Left lung (tissue), 14 donors: ENCODE measurements at regions of chr13 and their contacts with region 1.

Region 1: GRCh38 chr13:114065141-114065925 is 67.1 kb downstream of the RASA3 start:
- DNase-seq: peak; percentile 79 to 95 (median 88)
- ATAC-seq: peak; percentile 83
- H3K4me3 ChIP-seq: peak overlapping the region in 1 of 2 donors; percentile 35
- H3K27ac ChIP-seq: peak overlapping the region; percentile 91 to 98
- H3K4me1 ChIP-seq: peaks cover 51 to 76% of the 10 kb centered on the region in 2 donors
- H3K27me3 ChIP-seq: no peaks in the 10 kb centered on the region
- CTCF ChIP-seq: no peak

Region 2: DNA sequence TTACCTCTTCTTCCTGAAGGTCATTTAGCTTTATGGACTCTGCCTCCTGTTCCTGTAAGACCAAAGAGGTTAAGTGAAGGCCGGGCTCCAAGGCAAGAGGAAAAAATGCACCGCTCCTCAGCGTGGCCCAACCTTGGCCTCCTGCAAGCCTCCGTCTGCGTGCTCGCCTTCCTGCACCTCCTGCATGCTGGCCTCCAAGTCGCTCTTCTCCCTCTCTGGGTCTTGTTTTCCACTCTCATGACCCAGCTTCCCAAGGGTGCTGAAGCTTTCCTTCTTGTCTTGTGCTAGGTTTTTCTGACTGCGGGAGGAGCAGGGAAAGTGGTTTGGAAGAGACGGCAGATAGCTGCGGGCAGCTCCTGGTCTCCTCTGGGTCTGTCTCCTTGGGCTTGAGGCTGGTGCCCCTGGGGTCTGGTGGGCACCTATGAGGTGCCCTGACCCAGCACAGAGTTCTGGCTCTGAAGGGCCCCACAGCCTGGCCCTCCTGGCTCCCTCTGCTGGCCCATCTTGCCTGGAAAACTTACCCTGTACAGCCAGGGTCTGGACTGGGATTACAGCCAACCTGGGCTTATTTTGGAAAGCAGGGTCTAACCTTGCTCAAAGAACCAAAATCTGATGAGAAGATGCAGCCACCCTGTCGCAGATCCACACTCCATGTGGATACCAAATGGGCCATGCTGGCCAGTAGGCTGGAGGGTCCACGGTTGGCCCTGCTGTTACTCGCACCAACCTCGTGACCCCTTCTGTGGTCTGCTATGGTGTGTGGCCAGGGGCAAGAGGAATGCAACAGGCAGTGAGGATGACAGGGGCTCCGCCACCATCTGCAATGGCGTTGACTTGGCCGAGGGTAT is 96.6 kb before region 1 on chr13:
- intact Hi-C with region 1: no loop called
- DNase-seq: peak in 2 of 4 donors; percentile 25 to 26
- ATAC-seq: no peak
- H3K4me3 ChIP-seq: no peak overlapping the region
- H3K27ac ChIP-seq: no peak overlapping the region
- H3K4me1 ChIP-seq: peaks cover 0 to 6% of the 10 kb centered on the region in 2 donors
- H3K27me3 ChIP-seq: no peaks in the 10 kb centered on the region
- CTCF ChIP-seq: no peak

Region 3: GRCh38 chr13:114128624-114129522 is 63.5 kb after region 1 on chr13:
- intact Hi-C with region 1: loop called in 1 of 2 experiments (anchors 10 kb)
- DNase-seq: peak in 3 of 4 donors; percentile 64 to 94 (median 88)
- ATAC-seq: peak; percentile 62
- H3K4me3 ChIP-seq: peak overlapping the region in 1 of 2 donors; percentile 90
- H3K27ac ChIP-seq: peak overlapping the region; percentile 86 to 92
- H3K4me1 ChIP-seq: peaks cover 28 to 62% of the 10 kb centered on the region in 2 donors
- H3K27me3 ChIP-seq: peaks cover 0 to 15% of the 10 kb centered on the region in 2 donors
- CTCF ChIP-seq: no peak

Region 4: GRCh38 chr13:114185182-114185971 is 120.0 kb after region 1 on chr13:
- intact Hi-C with region 1: no loop called
- DNase-seq: no peak
- ATAC-seq: no peak
- H3K4me3 ChIP-seq: no peak overlapping the region
- H3K27ac ChIP-seq: no peak overlapping the region
- H3K4me1 ChIP-seq: no peaks in the 10 kb centered on the region
- H3K27me3 ChIP-seq: no peaks in the 10 kb centered on the region
- CTCF ChIP-seq: no peak